ENCODE measurements at regions of chr10 and their contacts with region 1.

Region 1: GRCh38 chr10:73879296-73880173 is 5.2 kb upstream of the CAMK2G start:
- DNase-seq: peak; percentile 97
- ATAC-seq: peak; percentile 93
- H3K4me3 Mint-ChIP-seq: no peak overlapping the region
- H3K27ac Mint-ChIP-seq: peak overlapping the region; percentile 61
- H3K4me1 Mint-ChIP-seq: peaks cover 53% of the 10 kb centered on the region
- H3K27me3 Mint-ChIP-seq: peaks cover 6% of the 10 kb centered on the region

Region 2: GRCh38 chr10:73772280-73773151 is 107.0 kb before region 1 on chr10:
- CTCF ChIA-PET with region 1: interaction called, 32 read pairs
- POLR2A ChIA-PET with region 1: no interaction called
- DNase-seq: peak; percentile 87
- ATAC-seq: peak; percentile 77
- H3K4me3 Mint-ChIP-seq: peak overlapping the region; percentile 94
- H3K27ac Mint-ChIP-seq: peak overlapping the region; percentile 95
- H3K4me1 Mint-ChIP-seq: peaks cover 64% of the 10 kb centered on the region
- H3K27me3 Mint-ChIP-seq: no peaks in the 10 kb centered on the region

Region 3: GRCh38 chr10:73837072-73837471 is 42.5 kb before region 1 on chr10:
- CTCF ChIA-PET with region 1: interaction called, 17 read pairs
- POLR2A ChIA-PET with region 1: no interaction called
- DNase-seq: no peak
- ATAC-seq: no peak
- H3K4me3 Mint-ChIP-seq: no peak overlapping the region
- H3K27ac Mint-ChIP-seq: no peak overlapping the region
- H3K4me1 Mint-ChIP-seq: no peaks in the 10 kb centered on the region
- H3K27me3 Mint-ChIP-seq: no peaks in the 10 kb centered on the region

Region 4: DNA sequence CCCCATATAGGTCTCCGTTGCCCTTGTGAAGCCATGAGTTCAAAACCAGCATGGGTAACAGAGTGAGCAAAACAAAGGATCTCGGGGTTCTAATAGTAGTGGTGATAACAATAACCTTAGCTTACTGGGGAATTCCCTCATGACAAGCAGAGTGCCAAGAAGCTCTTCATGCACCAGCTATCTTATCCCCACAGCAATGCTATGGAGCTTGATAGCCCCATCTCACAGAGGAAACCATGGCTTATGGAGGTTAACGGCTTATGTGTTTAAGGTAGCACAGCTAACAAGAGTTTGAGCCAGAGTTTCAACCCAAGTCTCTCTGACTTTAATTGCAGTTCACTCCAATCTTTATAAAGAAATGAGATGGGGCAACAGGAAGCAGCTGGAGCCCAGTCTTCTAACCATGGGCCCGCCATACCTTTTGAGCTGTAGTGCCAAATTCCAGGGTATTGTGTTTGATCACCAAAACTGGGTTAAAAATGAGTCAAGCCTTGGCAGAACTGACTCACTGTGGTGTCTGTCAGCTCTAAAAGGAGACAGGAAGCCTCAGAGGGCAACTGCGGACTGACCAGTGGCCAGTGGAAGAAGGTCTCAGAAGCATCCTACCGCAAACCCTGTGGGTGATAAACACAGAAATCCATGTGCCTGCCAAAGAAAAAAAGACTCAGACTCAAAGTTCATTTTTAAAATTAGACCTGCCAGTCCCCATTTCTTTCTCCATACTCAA is 14.9 kb after region 1 on chr10:
- CTCF ChIA-PET with region 1: interaction called, 37 read pairs
- POLR2A ChIA-PET with region 1: interaction called, 3 read pairs
- DNase-seq: peak; percentile 36
- ATAC-seq: peak; percentile 39
- H3K4me3 Mint-ChIP-seq: no peak overlapping the region
- H3K27ac Mint-ChIP-seq: no peak overlapping the region
- H3K4me1 Mint-ChIP-seq: peaks cover 4% of the 10 kb centered on the region
- H3K27me3 Mint-ChIP-seq: peaks cover 12% of the 10 kb centered on the region

Region 5: DNA sequence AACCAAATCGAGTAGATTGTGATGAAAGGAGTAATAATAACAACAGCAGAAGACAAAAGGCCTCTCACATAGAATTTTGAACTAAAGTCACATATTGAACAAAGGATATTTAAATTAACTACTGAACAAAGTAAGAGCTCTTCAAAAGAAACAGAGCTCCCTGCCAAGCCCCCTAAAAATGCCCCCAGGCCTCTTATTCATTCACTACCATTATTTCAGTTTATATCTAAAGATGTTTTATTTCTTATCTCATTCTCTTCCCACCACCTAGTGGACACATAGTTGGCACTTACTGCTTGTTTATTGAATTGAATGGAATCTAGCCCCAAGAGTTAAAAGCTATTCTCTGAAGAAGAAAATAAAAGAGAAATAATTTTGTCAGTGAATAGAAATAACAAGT is 155.8 kb after region 1 on chr10:
- CTCF ChIA-PET with region 1: interaction called, 13 read pairs
- POLR2A ChIA-PET with region 1: no interaction called
- DNase-seq: no peak
- ATAC-seq: no peak
- H3K4me3 Mint-ChIP-seq: no peak overlapping the region
- H3K27ac Mint-ChIP-seq: no peak overlapping the region
- H3K4me1 Mint-ChIP-seq: peaks cover 11% of the 10 kb centered on the region
- H3K27me3 Mint-ChIP-seq: no peaks in the 10 kb centered on the region

Region 6: GRCh38 chr10:74103560-74104248 is 224.2 kb after region 1 on chr10:
- CTCF ChIA-PET with region 1: interaction called, 12 read pairs
- POLR2A ChIA-PET with region 1: interaction called, 5 read pairs
- DNase-seq: no peak
- ATAC-seq: no peak
- H3K4me3 Mint-ChIP-seq: no peak overlapping the region
- H3K27ac Mint-ChIP-seq: no peak overlapping the region
- H3K4me1 Mint-ChIP-seq: peaks cover 4% of the 10 kb centered on the region
- H3K27me3 Mint-ChIP-seq: no peaks in the 10 kb centered on the region

Measured in activated CD8-positive, alpha-beta T cell treated with anti-CD3 and anti-CD28 coated beads, Interleukin-2, amount 10 ng/mL, durations not matched to agents 7 days and 5 days (primary cell).